Right cardiac atrium (tissue), 5 donors: ENCODE measurements at regions of chr10 and their contacts with region 1.

Region 1: DNA sequence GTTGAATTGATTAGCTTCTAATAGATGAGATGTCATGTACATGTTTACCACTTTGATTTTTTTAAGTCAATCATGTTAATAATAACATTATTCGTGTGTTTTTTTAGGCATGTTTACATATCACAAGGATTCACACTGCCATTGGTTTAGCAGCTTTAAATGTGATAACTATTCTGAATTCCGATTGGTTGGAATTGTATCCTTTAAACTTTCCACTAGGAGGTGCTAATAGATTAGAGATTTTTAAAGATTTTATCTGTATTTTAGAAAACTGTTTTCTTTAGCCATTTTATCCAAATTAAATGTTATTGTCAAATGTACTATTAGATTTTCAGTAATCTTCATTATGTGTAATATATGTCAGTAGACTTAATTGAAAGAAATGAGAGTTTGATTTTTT is 83.2 kb downstream of the HECTD2 start:
- DNase-seq: no peak
- ATAC-seq: no peak
- H3K4me3 ChIP-seq: no peak overlapping the region
- H3K27ac ChIP-seq: no peak overlapping the region
- H3K4me1 ChIP-seq: no peaks in the 10 kb centered on the region
- H3K27me3 ChIP-seq: no peaks in the 10 kb centered on the region

Region 2: GRCh38 chr10:91552274-91553095 is 59.2 kb after region 1 on chr10:
- intact Hi-C with region 1: no loop called
- DNase-seq: peak; percentile 47 to 70 (median 67)
- ATAC-seq: peak; percentile 88 to 91
- H3K4me3 ChIP-seq: no peak overlapping the region
- H3K27ac ChIP-seq: peak overlapping the region; percentile 30
- H3K4me1 ChIP-seq: peaks cover 5% of the 10 kb centered on the region
- H3K27me3 ChIP-seq: no peaks in the 10 kb centered on the region

Region 3: GRCh38 chr10:91604553-91605534 is 111.5 kb after region 1 on chr10:
- intact Hi-C with region 1: no loop called
- DNase-seq: no peak
- ATAC-seq: peak in 1 of 2 donors; percentile 3
- H3K4me3 ChIP-seq: no peak overlapping the region
- H3K27ac ChIP-seq: peak overlapping the region; percentile 38
- H3K4me1 ChIP-seq: peaks cover 9% of the 10 kb centered on the region
- H3K27me3 ChIP-seq: no peaks in the 10 kb centered on the region

Region 4: DNA sequence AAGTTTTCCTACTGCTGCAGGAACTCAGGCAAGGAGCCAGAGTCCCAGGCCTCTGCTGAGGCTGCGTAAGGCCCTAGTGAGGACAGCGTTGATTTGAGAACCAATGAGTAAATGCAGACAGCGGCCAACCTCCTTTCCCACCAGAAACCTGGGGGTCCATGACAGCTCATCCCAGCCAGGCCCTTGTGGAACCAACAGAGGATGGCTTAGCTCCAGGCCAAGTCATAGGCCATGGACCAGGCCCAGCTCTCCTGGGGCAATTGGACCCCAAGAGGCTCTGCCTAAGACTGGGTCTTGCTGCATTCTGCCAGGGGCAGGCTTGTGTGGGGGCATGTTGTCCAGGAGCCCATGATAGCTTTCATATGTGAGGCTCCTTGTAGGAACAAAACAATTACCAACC is 204.9 kb after region 1 on chr10:
- intact Hi-C with region 1: loop called in 1 of 4 experiments (anchors 5 kb)
- DNase-seq: no peak
- ATAC-seq: no peak
- H3K4me3 ChIP-seq: no peak overlapping the region
- H3K27ac ChIP-seq: no peak overlapping the region
- H3K4me1 ChIP-seq: no peaks in the 10 kb centered on the region
- H3K27me3 ChIP-seq: no peaks in the 10 kb centered on the region